ENCODE measurements at regions of chr2 and their contacts with region 1.

Region 1: GRCh38 chr2:205989271-205990071 is 96.5 kb downstream of the INO80D start:
- DNase-seq: no peak
- ATAC-seq: no peak
- H3K4me3 Mint-ChIP-seq: no peak overlapping the region
- H3K27ac Mint-ChIP-seq: no peak overlapping the region
- H3K4me1 Mint-ChIP-seq: no peaks in the 10 kb centered on the region
- H3K27me3 Mint-ChIP-seq: no peaks in the 10 kb centered on the region
- CTCF ChIP-seq: no peak

Region 2: GRCh38 chr2:205947621-205948495 is 41.6 kb before region 1 on chr2:
- CTCF ChIA-PET with region 1: no interaction called
- POLR2A ChIA-PET with region 1: no interaction called
- intact Hi-C with region 1: no loop called
- DNase-seq: peak; percentile 28
- ATAC-seq: peak; percentile 64
- H3K4me3 Mint-ChIP-seq: no peak overlapping the region
- H3K27ac Mint-ChIP-seq: no peak overlapping the region
- H3K4me1 Mint-ChIP-seq: peaks cover 2% of the 10 kb centered on the region
- H3K27me3 Mint-ChIP-seq: peaks cover 19% of the 10 kb centered on the region
- CTCF ChIP-seq: peak; percentile 89

Region 3: GRCh38 chr2:206045251-206045650 is 55.8 kb after region 1 on chr2:
- CTCF ChIA-PET with region 1: no interaction called
- POLR2A ChIA-PET with region 1: no interaction called
- intact Hi-C with region 1: no loop called
- DNase-seq: no peak
- ATAC-seq: no peak
- H3K4me3 Mint-ChIP-seq: no peak overlapping the region
- H3K27ac Mint-ChIP-seq: no peak overlapping the region
- H3K4me1 Mint-ChIP-seq: peaks cover 7% of the 10 kb centered on the region
- H3K27me3 Mint-ChIP-seq: no peaks in the 10 kb centered on the region
- CTCF ChIP-seq: no peak

Region 4: DNA sequence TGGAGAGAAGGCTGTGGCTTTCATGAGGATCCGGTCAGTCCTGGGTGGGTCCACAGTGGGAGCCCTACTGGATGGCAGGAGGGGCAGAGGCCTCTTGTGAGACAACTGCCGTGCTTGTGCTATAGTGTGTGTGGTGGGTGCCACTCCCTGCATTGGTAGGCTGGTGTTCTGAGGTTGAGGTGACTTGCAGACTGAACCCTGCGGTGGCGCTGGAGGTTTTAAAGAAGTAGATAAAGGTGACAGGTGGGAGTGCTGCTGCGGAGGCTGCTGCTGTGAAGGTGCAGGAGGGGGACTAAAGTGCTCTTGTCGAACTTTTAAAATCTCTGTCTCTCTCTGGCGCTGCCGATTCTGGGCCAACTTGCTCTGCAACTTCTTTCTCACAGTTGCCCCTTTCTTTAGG is 66.8 kb after region 1 on chr2:
- CTCF ChIA-PET with region 1: no interaction called
- POLR2A ChIA-PET with region 1: no interaction called
- intact Hi-C with region 1: loop called (anchors 5 kb)
- DNase-seq: no peak
- ATAC-seq: no peak
- H3K4me3 Mint-ChIP-seq: no peak overlapping the region
- H3K27ac Mint-ChIP-seq: no peak overlapping the region
- H3K4me1 Mint-ChIP-seq: peaks cover 13% of the 10 kb centered on the region
- H3K27me3 Mint-ChIP-seq: no peaks in the 10 kb centered on the region
- CTCF ChIP-seq: no peak

Region 5: DNA sequence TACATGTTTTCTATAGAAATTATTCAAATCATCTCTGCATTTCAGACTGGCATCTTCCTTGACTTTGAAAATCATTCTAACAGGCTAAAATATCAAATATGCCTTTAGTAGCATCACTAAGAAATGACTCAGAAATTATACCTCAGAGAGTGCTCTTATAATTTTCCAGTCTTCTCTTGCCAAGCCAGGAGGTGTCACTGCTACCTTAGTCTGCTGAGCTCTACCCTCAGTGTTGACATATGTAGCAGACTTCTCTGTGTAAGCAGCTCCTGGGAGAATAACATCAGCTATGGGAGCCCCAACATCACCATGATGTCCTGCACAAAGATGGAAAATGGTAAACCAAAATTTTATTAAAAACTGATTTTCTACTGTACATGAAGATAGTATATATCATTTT is 138.2 kb after region 1 on chr2:
- CTCF ChIA-PET with region 1: no interaction called
- POLR2A ChIA-PET with region 1: no interaction called
- intact Hi-C with region 1: no loop called
- DNase-seq: no peak
- ATAC-seq: no peak
- H3K4me3 Mint-ChIP-seq: no peak overlapping the region
- H3K27ac Mint-ChIP-seq: no peak overlapping the region
- H3K4me1 Mint-ChIP-seq: no peaks in the 10 kb centered on the region
- H3K27me3 Mint-ChIP-seq: no peaks in the 10 kb centered on the region
- CTCF ChIP-seq: no peak

Region 6: GRCh38 chr2:206198672-206199071 is 209.2 kb after region 1 on chr2:
- CTCF ChIA-PET with region 1: no interaction called
- POLR2A ChIA-PET with region 1: no interaction called
- intact Hi-C with region 1: no loop called
- DNase-seq: no peak
- ATAC-seq: no peak
- H3K4me3 Mint-ChIP-seq: no peak overlapping the region
- H3K27ac Mint-ChIP-seq: no peak overlapping the region
- H3K4me1 Mint-ChIP-seq: no peaks in the 10 kb centered on the region
- H3K27me3 Mint-ChIP-seq: peaks cover 25% of the 10 kb centered on the region
- CTCF ChIP-seq: no peak

Measured in activated B cell treated with CpG ODN at 0.5 μM for 24 hours (primary cell).